ENCODE measurements at regions of chr7 and their contacts with region 1.

Region 1: DNA sequence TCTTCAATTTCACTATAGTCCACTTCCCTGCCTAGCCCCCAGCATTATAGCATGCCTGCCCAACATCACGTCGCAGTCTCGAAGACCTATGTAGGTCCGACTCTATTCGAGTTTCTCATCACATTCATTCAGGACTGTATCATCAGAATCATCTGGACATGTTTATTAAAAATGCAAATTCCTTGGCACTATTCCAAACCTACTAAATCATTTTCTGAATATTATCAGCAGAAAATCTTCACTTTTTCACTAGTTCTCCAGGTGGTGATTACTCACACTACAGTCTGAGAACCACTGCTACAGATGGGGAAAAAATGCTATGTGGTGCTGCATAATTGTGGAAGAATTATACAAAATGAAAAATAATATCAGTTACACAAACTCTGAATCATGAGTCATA is 29.3 kb upstream of the ETV1 start:
- DNase-seq: no peak
- ATAC-seq: no peak
- H3K4me3 ChIP-seq: no peak overlapping the region
- H3K27ac ChIP-seq: no peak overlapping the region
- H3K4me1 ChIP-seq: no peaks in the 10 kb centered on the region
- H3K27me3 ChIP-seq: no peaks in the 10 kb centered on the region
- CTCF ChIP-seq: no peak
- EP300 ChIP-seq: no peak
- POLR2A ChIP-seq: no peak
- RAD21 ChIP-seq: no peak

Region 2: DNA sequence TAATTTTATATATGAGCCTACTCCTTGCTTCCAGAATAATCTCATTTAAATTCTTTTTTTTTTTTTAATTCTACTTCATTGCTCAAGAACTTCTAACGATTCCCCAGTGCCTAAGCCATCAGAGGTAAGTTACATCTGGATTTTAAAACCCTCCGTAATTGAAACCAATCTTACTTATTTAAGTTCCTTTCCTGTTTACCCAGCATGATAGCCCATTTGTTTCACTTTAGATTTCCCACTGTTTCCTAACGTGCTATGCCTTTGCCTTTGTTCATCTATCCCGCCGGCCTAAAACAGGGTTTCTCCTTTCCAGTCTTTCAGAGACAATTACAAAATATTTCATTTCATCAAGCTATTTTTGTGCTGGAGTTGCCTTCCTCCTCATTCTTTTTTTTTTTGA is 46.5 kb after region 1 on chr7:
- CTCF ChIA-PET with region 1: no interaction called
- POLR2A ChIA-PET with region 1: no interaction called
- in situ Hi-C with region 1: no loop called
- intact Hi-C with region 1: loop called (anchors 2 kb)
- DNase-seq: no peak
- ATAC-seq: no peak
- H3K4me3 ChIP-seq: no peak overlapping the region
- H3K27ac ChIP-seq: no peak overlapping the region
- H3K4me1 ChIP-seq: no peaks in the 10 kb centered on the region
- H3K27me3 ChIP-seq: no peaks in the 10 kb centered on the region
- CTCF ChIP-seq: no peak
- EP300 ChIP-seq: no peak
- POLR2A ChIP-seq: no peak
- RAD21 ChIP-seq: no peak